ENCODE measurements at regions of chr12 and their contacts with region 1.

Region 1: GRCh38 chr12:57238854-57239554 is 9.5 kb downstream of the SHMT2 start:
- DNase-seq: peak; percentile 78 to 92
- H3K4me3 ChIP-seq: peak overlapping the region; percentile 43
- H3K4me3 Mint-ChIP-seq: peak overlapping the region; percentile 79
- H3K27ac Mint-ChIP-seq: peak overlapping the region; percentile 83
- H3K4me1 ChIP-seq: peaks cover 19% of the 10 kb centered on the region
- H3K4me1 Mint-ChIP-seq: peaks cover 43% of the 10 kb centered on the region
- H3K27me3 ChIP-seq: peaks cover 7% of the 10 kb centered on the region
- H3K27me3 Mint-ChIP-seq: peaks cover 7% of the 10 kb centered on the region
- CTCF ChIP-seq: peak; percentile 100

Region 2: GRCh38 chr12:57175428-57176138 is 63.4 kb before region 1 on chr12:
- CTCF ChIA-PET with region 1: interaction called, 8 read pairs
- POLR2A ChIA-PET with region 1: no interaction called
- intact Hi-C with region 1: loop called (anchors 2 kb)
- DNase-seq: peak; percentile 55 to 75
- H3K4me3 ChIP-seq: no peak overlapping the region
- H3K4me3 Mint-ChIP-seq: no peak overlapping the region
- H3K27ac Mint-ChIP-seq: no peak overlapping the region
- H3K4me1 ChIP-seq: no peaks in the 10 kb centered on the region
- H3K4me1 Mint-ChIP-seq: no peaks in the 10 kb centered on the region
- H3K27me3 ChIP-seq: no peaks in the 10 kb centered on the region
- H3K27me3 Mint-ChIP-seq: no peaks in the 10 kb centered on the region
- CTCF ChIP-seq: peak; percentile 61 to 63

Region 3: DNA sequence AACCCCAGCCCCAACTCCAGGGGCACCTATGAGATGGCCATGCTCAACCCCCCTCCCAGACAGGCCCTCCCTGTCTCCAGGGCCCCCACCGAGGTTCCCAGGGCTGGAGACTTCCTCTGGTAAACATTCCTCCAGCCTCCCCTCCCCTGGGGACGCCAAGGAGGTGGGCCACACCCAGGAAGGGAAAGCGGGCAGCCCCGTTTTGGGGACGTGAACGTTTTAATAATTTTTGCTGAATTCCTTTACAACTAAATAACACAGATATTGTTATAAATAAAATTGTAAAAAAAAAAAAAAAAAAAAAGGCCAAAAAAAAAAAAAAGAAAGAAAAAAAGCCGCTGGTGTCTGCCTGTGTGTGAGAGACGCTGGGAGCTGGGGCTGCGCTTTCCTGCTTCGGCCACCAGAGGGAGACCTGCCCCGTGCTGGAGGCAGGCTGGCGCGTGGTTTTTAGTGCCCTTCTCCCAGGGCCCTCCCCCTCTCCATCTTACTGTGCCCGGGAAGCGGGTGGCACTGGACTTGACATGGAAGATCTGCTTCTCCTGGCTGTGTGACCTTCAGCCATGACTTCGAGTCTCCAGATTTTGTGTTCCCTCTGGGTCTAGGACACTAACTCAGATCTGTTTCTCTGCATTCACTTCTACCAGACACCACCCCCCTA is 25.8 kb before region 1 on chr12:
- CTCF ChIA-PET with region 1: interaction called, 80 read pairs
- POLR2A ChIA-PET with region 1: interaction called, 3 read pairs
- intact Hi-C with region 1: loop called (anchors 1 kb)
- DNase-seq: peak; percentile 83 to 90
- H3K4me3 ChIP-seq: no peak overlapping the region
- H3K4me3 Mint-ChIP-seq: no peak overlapping the region
- H3K27ac Mint-ChIP-seq: no peak overlapping the region
- H3K4me1 ChIP-seq: peaks cover 20% of the 10 kb centered on the region
- H3K4me1 Mint-ChIP-seq: peaks cover 28% of the 10 kb centered on the region
- H3K27me3 ChIP-seq: peaks cover 8% of the 10 kb centered on the region
- H3K27me3 Mint-ChIP-seq: peaks cover 14% of the 10 kb centered on the region
- CTCF ChIP-seq: peak; percentile 83 to 94

Region 4: DNA sequence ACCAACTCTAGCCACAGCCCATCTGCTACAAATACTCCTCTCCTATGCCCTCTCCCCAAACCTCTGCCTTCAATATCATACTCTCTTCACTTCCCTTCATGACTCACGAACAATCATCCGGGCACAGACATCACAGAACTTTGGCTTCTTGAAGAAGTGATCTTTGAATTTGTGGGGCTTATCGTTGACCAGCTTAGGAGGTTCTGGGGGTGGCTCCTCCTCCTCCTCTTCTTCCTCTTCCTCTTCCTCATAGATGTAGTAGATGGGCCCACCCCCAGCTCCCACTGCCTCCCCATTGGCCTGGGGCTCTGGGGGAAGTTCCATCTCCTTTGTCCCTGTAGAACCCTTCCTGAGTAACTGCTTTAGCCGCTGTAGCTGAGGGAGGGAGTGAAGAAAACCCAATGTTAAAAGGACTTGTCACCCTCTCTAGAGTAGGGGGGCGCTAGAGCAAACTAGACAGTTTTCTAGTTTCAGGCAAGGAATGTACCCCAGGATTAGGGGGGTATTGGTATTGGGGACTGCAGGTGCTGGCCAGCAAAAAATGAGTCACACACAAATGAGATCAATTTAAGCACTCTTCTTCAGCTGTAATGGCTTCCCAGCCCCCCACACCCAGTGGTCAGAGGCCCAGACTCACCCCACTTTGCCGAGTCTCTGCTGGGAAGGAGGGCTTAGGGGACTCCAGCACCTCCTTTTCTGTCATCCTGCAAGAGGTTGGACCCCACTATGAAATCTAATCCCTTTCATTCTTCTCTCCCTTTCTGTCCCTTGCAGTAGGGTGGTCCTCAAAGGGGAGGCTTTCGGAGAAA is 10.1 kb after region 1 on chr12:
- CTCF ChIA-PET with region 1: interaction called, 11 read pairs
- POLR2A ChIA-PET with region 1: no interaction called
- intact Hi-C with region 1: no loop called
- DNase-seq: no peak
- H3K4me3 ChIP-seq: no peak overlapping the region
- H3K4me3 Mint-ChIP-seq: no peak overlapping the region
- H3K27ac Mint-ChIP-seq: no peak overlapping the region
- H3K4me1 ChIP-seq: no peaks in the 10 kb centered on the region
- H3K4me1 Mint-ChIP-seq: no peaks in the 10 kb centered on the region
- H3K27me3 ChIP-seq: peaks cover 2% of the 10 kb centered on the region; the same call in 1 of the 2 replicates
- H3K27me3 Mint-ChIP-seq: peaks cover 2% of the 10 kb centered on the region
- CTCF ChIP-seq: no peak

Region 5: DNA sequence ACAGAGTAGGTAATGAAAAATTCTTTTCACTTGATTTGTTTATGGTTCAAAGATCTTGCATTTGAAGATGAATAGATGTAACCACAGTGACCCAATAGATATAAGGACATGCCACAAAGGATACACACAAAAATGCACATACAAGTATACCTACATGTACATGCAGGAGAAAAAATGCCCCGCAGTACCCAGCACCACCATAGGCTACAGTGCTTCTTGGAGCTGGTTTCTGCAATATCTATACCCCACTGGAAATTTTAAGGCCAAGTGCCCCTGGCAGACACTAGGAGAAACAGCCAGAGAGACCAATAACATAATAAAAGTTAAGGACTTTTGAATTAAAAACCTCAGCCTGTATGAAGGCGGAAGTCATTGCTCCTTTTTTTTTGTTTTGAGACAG is 24.1 kb after region 1 on chr12:
- CTCF ChIA-PET with region 1: interaction called, 11 read pairs
- POLR2A ChIA-PET with region 1: no interaction called
- intact Hi-C with region 1: no loop called
- DNase-seq: no peak
- H3K4me3 ChIP-seq: no peak overlapping the region
- H3K4me3 Mint-ChIP-seq: no peak overlapping the region
- H3K27ac Mint-ChIP-seq: no peak overlapping the region
- H3K4me1 ChIP-seq: no peaks in the 10 kb centered on the region
- H3K4me1 Mint-ChIP-seq: no peaks in the 10 kb centered on the region
- H3K27me3 ChIP-seq: no peaks in the 10 kb centered on the region
- H3K27me3 Mint-ChIP-seq: no peaks in the 10 kb centered on the region
- CTCF ChIP-seq: no peak

Measured in Caco-2 (cell line).